ENCODE measurements at regions of chr6 and their contacts with region 1.

Region 1: DNA sequence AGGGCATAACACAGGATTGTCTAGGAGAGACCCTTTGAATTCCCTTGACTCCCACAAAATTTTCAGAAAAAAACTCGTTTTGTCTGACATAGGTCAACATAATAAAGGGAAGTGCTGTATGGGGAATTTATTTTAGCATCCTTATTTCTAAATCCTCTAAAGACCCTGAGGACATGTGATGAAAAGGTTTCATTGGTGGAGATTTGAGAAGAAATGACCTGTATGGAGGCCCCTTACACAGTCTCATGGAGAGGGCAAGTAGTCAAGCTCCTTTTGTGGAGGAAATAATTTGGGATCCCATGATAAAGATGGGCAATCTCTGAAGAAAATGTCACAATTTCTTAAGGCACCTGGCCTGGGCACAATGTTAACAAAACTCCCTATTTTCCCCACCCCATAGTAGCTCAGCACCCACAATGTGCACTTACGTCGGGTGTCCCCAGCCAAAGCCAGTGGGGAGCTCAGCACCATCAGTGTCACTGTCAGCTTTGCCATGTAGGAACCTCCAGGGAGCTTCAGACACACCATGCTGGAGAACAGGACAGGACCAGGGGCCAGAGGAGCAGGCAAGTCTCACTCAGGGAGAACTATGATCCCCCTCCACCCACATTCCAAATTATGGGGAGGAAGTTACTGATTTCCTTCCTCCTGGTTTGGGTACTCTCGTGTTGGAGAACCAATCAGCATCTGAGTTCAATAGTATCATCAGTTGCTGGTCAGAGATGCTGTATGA is at the start of gene HLA-DRB5:
- DNase-seq: peak; percentile 22 to 70 (median 51)
- H3K4me3 ChIP-seq: no peak within 1 kb of the TSS
- H3K27ac ChIP-seq: peak within 1 kb of the TSS in 1 of 5 donors; percentile 19
- H3K4me1 ChIP-seq: no peaks in the 10 kb centered on the region
- H3K27me3 ChIP-seq: no peaks in the 10 kb centered on the region
- CTCF ChIP-seq: no peak
- POLR2A ChIP-seq: peak in 1 of 2 donors; percentile 68
- total RNA-seq, gene HLA-DRB5: 0.55 to 694 (median 29.5) TPM in 7 of 9 donors, not detected in the others

Region 2: DNA sequence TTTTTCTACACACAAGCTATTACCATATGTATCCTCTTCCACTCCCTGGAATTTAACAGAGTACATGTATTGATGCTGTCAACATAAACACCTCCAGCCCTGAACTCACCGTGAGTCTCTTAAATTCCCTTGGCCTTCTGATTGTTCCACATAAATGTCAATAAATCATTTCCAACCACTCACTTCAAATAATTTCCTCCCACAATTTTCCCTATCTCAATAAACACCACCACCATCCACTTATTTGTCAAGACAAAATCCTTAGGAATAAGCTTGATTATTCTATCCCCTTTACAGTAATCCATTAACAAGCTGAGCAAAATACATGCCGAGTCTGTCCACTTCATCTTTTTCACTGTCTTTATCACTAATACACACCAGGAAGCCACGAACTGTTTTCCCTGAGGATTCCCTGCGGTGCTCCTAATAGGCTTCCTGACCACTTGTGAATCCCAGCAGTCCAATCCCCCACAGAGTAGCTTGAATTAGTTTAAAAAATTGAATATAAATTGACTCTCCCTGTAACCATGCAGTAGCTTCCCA is 40.6 kb after region 1 on chr6:
- intact Hi-C with region 1: loop called in 1 of 2 experiments (anchors 5 kb)
- DNase-seq: no peak
- H3K4me3 ChIP-seq: no peak overlapping the region
- H3K27ac ChIP-seq: no peak overlapping the region
- H3K4me1 ChIP-seq: no peaks in the 10 kb centered on the region
- H3K27me3 ChIP-seq: no peaks in the 10 kb centered on the region
- CTCF ChIP-seq: no peak
- POLR2A ChIP-seq: no peak

Region 3: DNA sequence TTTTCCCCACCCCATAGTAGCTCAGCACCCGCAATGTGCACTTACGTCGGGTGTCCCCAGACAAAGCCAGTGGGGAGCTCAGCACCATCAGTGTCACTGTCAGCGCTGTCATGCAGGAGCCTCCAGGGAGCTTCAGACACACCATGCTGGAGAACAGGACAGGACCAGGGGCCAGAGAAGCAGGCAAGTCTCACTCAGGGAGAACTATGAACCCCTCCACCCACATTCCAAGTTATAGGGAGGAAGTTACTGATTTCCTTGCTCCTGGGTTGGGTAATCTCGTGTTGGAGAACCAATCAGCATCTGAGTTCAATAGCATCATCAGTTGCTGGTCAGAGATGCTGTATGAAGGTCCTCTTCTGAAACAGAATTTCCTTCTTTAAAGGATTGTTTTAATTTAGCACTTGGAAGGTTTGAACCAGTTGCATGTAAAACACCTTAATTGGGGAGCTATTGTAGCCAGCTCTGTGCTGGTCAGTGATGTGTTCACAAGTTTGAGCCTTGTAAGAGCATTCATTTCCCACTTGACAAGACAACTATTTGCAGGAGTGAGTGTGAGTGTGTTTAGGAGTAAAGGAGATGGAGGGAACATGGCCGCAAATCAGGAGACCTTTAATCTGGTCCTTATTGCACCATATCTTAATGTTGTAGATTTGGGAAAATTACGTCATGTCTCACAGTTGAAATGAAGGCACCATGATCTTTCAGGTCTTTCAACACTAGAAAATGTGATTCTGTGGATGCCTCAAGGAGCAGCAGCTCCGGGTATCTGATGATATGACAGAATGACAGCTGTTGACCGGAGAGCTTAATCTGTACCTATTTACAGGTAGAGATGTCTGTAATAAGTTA is 60.0 kb after region 1 on chr6 and contains the start of gene HLA-DRB1:
- intact Hi-C with region 1: loop called in 1 of 2 experiments (anchors 10 kb)
- DNase-seq: peak in 6 of 7 donors; percentile 31 to 66 (median 40)
- H3K4me3 ChIP-seq: no peak within 1 kb of the TSS
- H3K27ac ChIP-seq: peak within 1 kb of the TSS in 1 of 5 donors; percentile 54
- H3K4me1 ChIP-seq: no peaks in the 10 kb centered on the region
- H3K27me3 ChIP-seq: no peaks in the 10 kb centered on the region
- CTCF ChIP-seq: no peak
- POLR2A ChIP-seq: peak in 1 of 2 donors; percentile 80
- total RNA-seq, gene HLA-DRB1: 14.8 to 627 (median 152) TPM

Region 4: DNA sequence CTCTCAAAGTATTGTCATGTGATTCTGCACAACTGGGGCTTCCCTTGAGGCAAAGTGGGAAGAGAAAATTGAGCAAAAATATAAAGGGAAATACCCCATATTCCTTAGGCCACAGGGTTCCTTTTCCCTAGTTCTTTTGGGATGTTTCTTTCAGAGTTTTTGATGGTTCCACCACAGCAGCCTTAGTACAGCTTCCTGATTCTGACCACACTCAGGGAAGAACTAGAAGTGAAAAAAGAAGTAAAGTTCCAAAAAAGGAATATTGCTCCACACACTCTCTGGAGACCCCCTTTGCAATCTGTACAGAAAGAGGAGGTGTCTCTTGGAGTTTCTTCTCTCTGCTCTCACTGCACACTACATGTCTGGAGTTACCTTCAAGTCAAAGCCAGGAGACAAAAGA is 183.4 kb after region 1 on chr6:
- intact Hi-C with region 1: no loop called
- DNase-seq: no peak
- H3K4me3 ChIP-seq: no peak overlapping the region
- H3K27ac ChIP-seq: no peak overlapping the region
- H3K4me1 ChIP-seq: no peaks in the 10 kb centered on the region
- H3K27me3 ChIP-seq: no peaks in the 10 kb centered on the region
- CTCF ChIP-seq: no peak
- POLR2A ChIP-seq: no peak

Measured in adrenal gland (tissue), 19 donors.